Naive thymus-derived CD4-positive, alpha-beta T cell (primary cell): ENCODE measurements at regions of chr2 and their contacts with region 1.

Region 1: DNA sequence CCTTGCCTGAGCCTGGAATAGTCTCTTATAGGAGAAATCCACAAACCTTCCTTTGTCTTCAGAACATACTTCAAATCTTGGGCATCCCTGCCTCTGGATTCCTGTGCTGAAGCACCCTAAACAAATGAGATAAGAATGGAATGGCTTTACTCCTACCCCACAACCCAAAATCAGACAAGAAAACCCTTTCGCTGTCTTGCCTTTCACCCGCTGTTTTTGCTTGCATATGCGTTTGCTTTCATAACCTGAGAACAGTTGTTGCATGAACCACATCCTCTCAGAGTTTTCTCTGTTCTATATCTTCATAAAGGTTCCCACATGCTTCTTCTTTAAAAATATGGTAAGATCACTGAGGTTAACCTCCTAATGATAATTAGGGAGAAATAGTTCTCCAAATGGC is 132.1 kb upstream of the MAP3K20 start:
- DNase-seq: peak in 6 of 9 donors; percentile 14 to 65 (median 47)
- ATAC-seq: peak; percentile 65
- H3K4me3 ChIP-seq: no peak overlapping the region
- H3K4me3 Mint-ChIP-seq: peak overlapping the region in 9 of 10 donors; percentile 48 to 76 (median 60)
- H3K27ac ChIP-seq: peak overlapping the region; percentile 47
- H3K27ac Mint-ChIP-seq: peak overlapping the region; percentile 69 to 97 (median 86)
- H3K4me1 ChIP-seq: peaks cover 0 to 25% of the 10 kb centered on the region in 2 donors
- H3K4me1 Mint-ChIP-seq: peaks cover 9 to 36% (median 29%) of the 10 kb centered on the region in 7 donors
- H3K27me3 ChIP-seq: peaks cover 0 to 4% of the 10 kb centered on the region in 2 donors
- H3K27me3 Mint-ChIP-seq: peaks cover 0 to 21% (median 0%) of the 10 kb centered on the region in 5 donors

Region 2: GRCh38 chr2:172972005-172972619 is 28.6 kb after region 1 on chr2:
- CTCF ChIA-PET with region 1: no interaction called
- POLR2A ChIA-PET with region 1: no interaction called
- intact Hi-C with region 1: loop called in 1 of 2 experiments (anchors 1 kb)
- DNase-seq: peak in 5 of 9 donors; percentile 21 to 43 (median 31)
- ATAC-seq: peak; percentile 66
- H3K4me3 ChIP-seq: no peak overlapping the region
- H3K4me3 Mint-ChIP-seq: no peak overlapping the region
- H3K27ac ChIP-seq: no peak overlapping the region
- H3K27ac Mint-ChIP-seq: peak overlapping the region in 5 of 9 donors; percentile 4 to 94 (median 76)
- H3K4me1 ChIP-seq: no peaks in the 10 kb centered on the region
- H3K4me1 Mint-ChIP-seq: peaks cover 8 to 34% (median 21%) of the 10 kb centered on the region in 7 donors
- H3K27me3 ChIP-seq: no peaks in the 10 kb centered on the region
- H3K27me3 Mint-ChIP-seq: peaks cover 0 to 10% (median 6%) of the 10 kb centered on the region in 5 donors

Region 3: DNA sequence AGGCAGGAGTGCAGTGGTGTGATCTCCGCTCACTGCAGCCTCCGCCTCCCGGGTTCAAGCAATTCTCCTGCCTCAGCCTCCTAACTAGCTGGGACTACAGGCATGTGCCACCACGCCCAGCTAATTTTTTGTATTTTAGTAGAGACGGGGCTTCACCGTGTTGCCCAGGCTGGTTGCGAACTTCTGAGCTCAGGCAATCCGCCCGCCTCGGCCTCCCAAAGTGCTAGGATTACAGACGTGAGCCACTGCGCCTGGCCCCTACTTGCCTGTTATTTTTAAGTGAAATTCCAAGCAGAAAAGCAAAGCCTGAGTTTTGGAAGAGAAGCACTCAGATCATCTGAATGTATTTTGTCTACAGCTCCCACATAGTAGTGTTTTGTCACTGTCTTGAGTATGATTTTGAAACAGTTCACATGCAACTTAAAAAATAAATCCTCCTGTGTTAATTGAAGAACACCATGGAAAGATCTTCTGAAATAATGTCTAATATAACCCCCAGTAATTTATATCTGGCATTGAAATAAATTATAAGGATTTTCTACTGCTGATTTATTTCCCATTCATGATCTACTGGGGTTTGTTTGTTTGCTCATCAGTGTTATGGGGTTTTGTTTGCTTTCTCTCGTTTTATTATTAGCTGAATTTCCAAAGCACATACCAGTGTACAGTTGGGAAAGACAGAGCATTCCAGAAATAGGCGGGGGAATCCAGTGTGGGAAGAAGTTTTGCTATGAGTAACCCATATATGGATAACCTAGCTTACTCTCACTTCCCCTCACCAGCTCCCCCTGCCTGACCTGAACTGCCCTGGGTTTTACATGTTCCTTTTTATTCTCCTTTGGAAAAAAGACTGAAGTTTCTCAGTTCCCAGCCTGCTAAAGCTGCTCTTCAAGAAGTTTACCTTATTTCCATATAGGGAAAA is 52.0 kb after region 1 on chr2:
- CTCF ChIA-PET with region 1: no interaction called
- POLR2A ChIA-PET with region 1: no interaction called
- intact Hi-C with region 1: no loop called
- DNase-seq: no peak
- ATAC-seq: peak; percentile 54
- H3K4me3 ChIP-seq: no peak overlapping the region
- H3K4me3 Mint-ChIP-seq: no peak overlapping the region
- H3K27ac ChIP-seq: no peak overlapping the region
- H3K27ac Mint-ChIP-seq: no peak overlapping the region
- H3K4me1 ChIP-seq: no peaks in the 10 kb centered on the region
- H3K4me1 Mint-ChIP-seq: peaks cover 0 to 2% (median 0%) of the 10 kb centered on the region in 7 donors
- H3K27me3 ChIP-seq: no peaks in the 10 kb centered on the region
- H3K27me3 Mint-ChIP-seq: peaks cover 0 to 6% (median 4%) of the 10 kb centered on the region in 5 donors